ENCODE measurements at regions of chr11 and their contacts with region 1.

Region 1: GRCh38 chr11:45917623-45918330 is at the start of gene PEX16:
- DNase-seq: peak; percentile 99
- H3K4me3 Mint-ChIP-seq: peak within 1 kb of the TSS; percentile 99
- H3K27ac Mint-ChIP-seq: peak within 1 kb of the TSS; percentile 97
- H3K4me1 Mint-ChIP-seq: peaks cover 21% of the 10 kb centered on the region
- H3K27me3 Mint-ChIP-seq: peaks cover 10% of the 10 kb centered on the region
- total RNA-seq, gene PEX16: 31.3 and 34.8 TPM in 2 replicates

Region 2: GRCh38 chr11:45804761-45805304 is 112.9 kb before region 1 on chr11 and contains the start of gene SLC35C1:
- intact Hi-C with region 1: loop called (anchors 1 kb)
- DNase-seq: peak; percentile 99
- H3K4me3 Mint-ChIP-seq: peak within 1 kb of the TSS; percentile 98
- H3K27ac Mint-ChIP-seq: peak within 1 kb of the TSS; percentile 96
- H3K4me1 Mint-ChIP-seq: peaks cover 32% of the 10 kb centered on the region
- H3K27me3 Mint-ChIP-seq: no peaks in the 10 kb centered on the region
- total RNA-seq, gene SLC35C1: 15.3 and 17.4 TPM in 2 replicates

Region 3: DNA sequence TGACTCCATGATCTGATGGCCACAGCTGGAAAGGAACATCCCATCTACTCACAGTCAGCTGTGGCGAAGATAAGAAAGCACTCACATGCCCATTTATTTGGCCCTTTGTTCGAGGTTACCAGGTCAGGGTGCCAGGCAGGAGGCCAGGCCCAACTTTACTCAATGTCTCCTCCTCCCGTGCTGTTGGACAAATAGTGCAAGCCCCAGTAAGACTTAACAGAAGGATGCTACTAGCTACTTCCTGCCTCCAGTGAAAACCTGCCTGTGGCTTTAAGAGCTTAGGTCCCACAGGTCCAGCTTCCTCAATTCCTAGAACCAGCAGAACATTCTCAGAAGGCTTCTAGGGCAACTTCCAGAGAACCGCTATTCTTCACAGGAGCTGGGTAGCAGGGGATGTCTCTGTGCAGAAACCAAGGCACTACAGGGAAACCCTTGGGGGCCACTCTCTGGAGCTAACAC is 83.5 kb before region 1 on chr11:
- intact Hi-C with region 1: no loop called
- DNase-seq: peak; percentile 87
- H3K4me3 Mint-ChIP-seq: peak overlapping the region; percentile 77
- H3K27ac Mint-ChIP-seq: peak overlapping the region; percentile 90
- H3K4me1 Mint-ChIP-seq: peaks cover 23% of the 10 kb centered on the region
- H3K27me3 Mint-ChIP-seq: peaks cover 13% of the 10 kb centered on the region

Region 4: DNA sequence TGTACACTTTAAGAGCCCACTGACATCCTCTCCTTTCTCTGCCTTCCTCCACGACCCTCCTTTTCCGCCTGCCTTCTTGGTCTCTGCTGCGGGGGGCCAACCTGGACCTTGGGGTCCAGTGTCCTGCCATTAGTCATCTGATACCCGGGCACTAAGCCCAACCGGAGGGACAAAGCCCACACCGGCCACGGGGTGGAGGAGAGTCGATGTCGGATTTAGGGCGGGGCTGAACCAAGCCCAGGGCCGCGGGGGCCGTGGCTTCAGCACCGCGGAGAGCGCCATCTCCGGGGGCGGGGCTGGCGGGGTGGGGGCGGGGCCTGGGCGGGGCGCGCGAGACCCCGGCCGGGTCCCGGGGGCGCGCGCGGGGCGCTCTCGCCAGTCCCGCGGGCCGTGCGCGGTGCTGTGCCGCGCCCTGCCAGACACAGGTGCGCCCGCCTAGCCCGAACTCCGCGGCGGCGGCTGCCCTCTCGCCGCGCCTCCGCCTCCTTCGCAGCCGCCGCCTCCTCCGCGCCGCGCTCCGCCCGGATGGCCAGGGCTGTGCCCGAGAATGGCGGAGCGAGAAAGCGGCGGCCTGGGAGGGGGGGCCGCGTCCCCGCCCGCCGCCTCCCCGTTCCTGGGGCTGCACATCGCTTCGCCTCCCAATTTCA is 32.4 kb before region 1 on chr11 and contains the start of gene MAPK8IP1:
- intact Hi-C with region 1: loop called (anchors 1 kb)
- DNase-seq: peak; percentile 88
- H3K4me3 Mint-ChIP-seq: peak within 1 kb of the TSS; percentile 79
- H3K27ac Mint-ChIP-seq: no peak within 1 kb of the TSS
- H3K4me1 Mint-ChIP-seq: peaks cover 6% of the 10 kb centered on the region
- H3K27me3 Mint-ChIP-seq: peaks cover 10% of the 10 kb centered on the region
- total RNA-seq, gene MAPK8IP1: 0.49 and 0.83 TPM in 2 replicates

Region 5: DNA sequence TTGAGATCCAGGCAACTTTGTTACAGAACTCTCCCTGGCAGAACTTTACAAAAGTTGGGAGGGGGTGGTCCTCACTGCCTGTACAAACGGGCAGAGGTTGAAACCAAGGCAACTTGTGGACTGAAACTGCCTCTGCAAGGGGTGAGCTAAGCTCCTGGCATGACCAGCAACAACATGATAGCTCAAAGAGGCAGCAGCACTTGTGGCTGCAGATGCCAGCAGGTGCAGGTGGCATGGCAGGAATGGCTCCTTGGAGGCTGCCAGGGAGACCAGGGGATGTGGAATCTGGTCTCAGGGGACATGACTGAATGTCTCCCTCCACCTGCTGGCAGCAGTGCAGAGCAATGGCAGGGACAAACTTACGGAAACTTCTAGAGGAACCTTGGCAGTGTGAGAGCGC is 242.3 kb after region 1 on chr11:
- intact Hi-C with region 1: no loop called
- DNase-seq: no peak
- H3K4me3 Mint-ChIP-seq: no peak overlapping the region
- H3K27ac Mint-ChIP-seq: no peak overlapping the region
- H3K4me1 Mint-ChIP-seq: peaks cover 3% of the 10 kb centered on the region
- H3K27me3 Mint-ChIP-seq: peaks cover 31% of the 10 kb centered on the region